ENCODE measurements at regions of chr19 and their contacts with region 1.

Region 1: DNA sequence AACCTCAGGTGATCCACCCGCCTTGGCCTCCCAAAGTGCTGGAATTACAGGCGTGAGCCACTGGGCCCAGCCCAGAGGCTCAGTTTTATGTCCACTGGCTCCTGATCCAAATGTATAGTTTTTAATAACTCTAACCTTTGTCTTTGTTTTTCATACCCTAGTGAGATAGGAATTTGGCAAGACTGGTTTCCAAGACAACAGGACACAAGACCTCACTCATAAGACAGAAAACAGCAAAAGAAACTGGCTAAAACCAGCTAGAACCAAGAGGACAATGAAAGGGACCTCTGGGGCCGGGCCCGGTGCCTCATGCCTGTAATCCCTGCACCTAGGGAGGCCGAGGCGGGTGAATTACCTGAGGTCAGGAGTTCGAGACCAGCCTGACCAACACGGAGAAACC is 27.6 kb downstream of the CPT1C start:
- DNase-seq: no peak
- ATAC-seq: no peak
- H3K4me3 ChIP-seq: no peak overlapping the region
- H3K27ac ChIP-seq: no peak overlapping the region
- H3K4me1 ChIP-seq: no peaks in the 10 kb centered on the region; the same call in 2 of the 3 replicates
- CTCF ChIP-seq: no peak
- EP300 ChIP-seq: no peak
- POLR2A ChIP-seq: no peak
- RAD21 ChIP-seq: no peak

Region 2: GRCh38 chr19:49635530-49636198 is 82.8 kb before region 1 on chr19:
- CTCF ChIA-PET with region 1: no interaction called
- POLR2A ChIA-PET with region 1: no interaction called
- DNase-seq: peak in 1 of 2 experiments; percentile 50
- ATAC-seq: no peak
- H3K4me3 ChIP-seq: no peak overlapping the region
- H3K27ac ChIP-seq: peak overlapping the region in 1 of 2 experiments; percentile 26; a peak in 2 of 6 replicates
- H3K4me1 ChIP-seq: peaks cover 20% of the 10 kb centered on the region
- CTCF ChIP-seq: no peak
- EP300 ChIP-seq: no peak
- POLR2A ChIP-seq: no peak
- RAD21 ChIP-seq: no peak

Region 3: DNA sequence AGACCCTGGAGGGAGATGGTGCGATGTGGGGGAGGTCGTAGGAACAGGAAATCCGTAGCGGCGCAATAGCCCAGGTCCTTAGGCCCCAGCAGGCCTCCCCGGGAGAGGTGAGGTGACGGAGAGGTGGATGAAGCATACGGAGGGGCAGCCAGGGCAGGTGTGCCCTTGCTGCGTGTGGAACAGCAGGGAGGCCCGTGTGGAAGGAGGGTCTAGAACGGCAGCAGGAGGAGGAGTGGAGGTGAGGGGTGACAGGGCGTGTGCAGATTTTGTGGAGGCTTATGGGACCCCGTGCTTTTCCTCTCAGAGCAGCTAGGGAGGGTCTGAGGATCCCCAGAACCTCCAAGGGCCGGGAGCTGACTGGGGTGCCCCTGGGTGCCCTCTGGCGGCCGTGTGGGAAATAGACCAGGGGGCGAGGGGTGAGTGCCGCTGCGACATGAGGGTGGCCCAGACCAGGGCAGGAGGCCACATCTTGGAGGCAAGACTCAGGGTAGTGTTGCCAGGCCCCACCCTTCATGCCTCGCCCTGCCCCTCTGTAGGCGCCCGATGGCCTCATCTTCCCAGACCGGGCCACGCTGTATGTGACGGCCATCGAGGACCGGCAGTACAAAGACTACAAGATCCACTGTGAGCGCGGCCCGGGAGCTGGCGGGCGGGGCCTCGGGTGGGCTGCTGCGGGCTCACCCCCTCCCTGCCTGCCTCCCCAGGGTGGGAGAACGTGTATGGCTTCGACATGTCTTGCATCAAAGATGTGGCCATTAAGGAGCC is 34.1 kb before region 1 on chr19:
- CTCF ChIA-PET with region 1: interaction called, 29 read pairs
- POLR2A ChIA-PET with region 1: no interaction called
- DNase-seq: peak; percentile 57 to 75
- ATAC-seq: peak; percentile 50 to 70
- H3K4me3 ChIP-seq: no peak overlapping the region
- H3K27ac ChIP-seq: 0 out of 6 replicates have a peak overlapping the region, but pooled peaks of 1 of the 2 experiments have one; percentile 2
- H3K4me1 ChIP-seq: peaks cover 27% of the 10 kb centered on the region
- CTCF ChIP-seq: peak; percentile 65
- EP300 ChIP-seq: no peak
- POLR2A ChIP-seq: no peak
- RAD21 ChIP-seq: peak in 1 of 2 experiments; percentile 17; a peak in 1 of 5 replicates

Region 4: GRCh38 chr19:49705919-49706318 is 12.6 kb before region 1 on chr19:
- CTCF ChIA-PET with region 1: interaction called, 29 read pairs
- POLR2A ChIA-PET with region 1: no interaction called
- DNase-seq: no peak
- ATAC-seq: no peak
- H3K4me3 ChIP-seq: no peak overlapping the region
- H3K27ac ChIP-seq: no peak overlapping the region
- H3K4me1 ChIP-seq: peaks cover 6% of the 10 kb centered on the region; the same call in 1 of the 3 replicates
- CTCF ChIP-seq: no peak
- EP300 ChIP-seq: no peak
- POLR2A ChIP-seq: no peak
- RAD21 ChIP-seq: no peak

Region 5: GRCh38 chr19:49749055-49749716 is 30.7 kb after region 1 on chr19:
- CTCF ChIA-PET with region 1: interaction called, 12 read pairs
- POLR2A ChIA-PET with region 1: no interaction called
- DNase-seq: peak in 1 of 2 experiments; percentile 43
- ATAC-seq: peak; percentile 43 to 61; a peak in 3 of 6 replicates
- H3K4me3 ChIP-seq: no peak overlapping the region
- H3K27ac ChIP-seq: no peak overlapping the region
- H3K4me1 ChIP-seq: no peaks in the 10 kb centered on the region
- CTCF ChIP-seq: no peak
- EP300 ChIP-seq: no peak
- POLR2A ChIP-seq: no peak
- RAD21 ChIP-seq: no peak

Region 6: GRCh38 chr19:49758292-49758691 is 39.8 kb after region 1 on chr19:
- CTCF ChIA-PET with region 1: interaction called, 15 read pairs
- POLR2A ChIA-PET with region 1: no interaction called
- DNase-seq: peak in 1 of 2 experiments; percentile 35
- ATAC-seq: peak; percentile 51 to 67; a peak in 5 of 6 replicates
- H3K4me3 ChIP-seq: no peak overlapping the region
- H3K27ac ChIP-seq: peak overlapping the region in 1 of 2 experiments; percentile 53; a peak in 3 of 6 replicates
- H3K4me1 ChIP-seq: peaks cover 8% of the 10 kb centered on the region; the same call in 1 of the 3 replicates
- CTCF ChIP-seq: no peak
- EP300 ChIP-seq: no peak
- POLR2A ChIP-seq: no peak
- RAD21 ChIP-seq: no peak

Region 7: DNA sequence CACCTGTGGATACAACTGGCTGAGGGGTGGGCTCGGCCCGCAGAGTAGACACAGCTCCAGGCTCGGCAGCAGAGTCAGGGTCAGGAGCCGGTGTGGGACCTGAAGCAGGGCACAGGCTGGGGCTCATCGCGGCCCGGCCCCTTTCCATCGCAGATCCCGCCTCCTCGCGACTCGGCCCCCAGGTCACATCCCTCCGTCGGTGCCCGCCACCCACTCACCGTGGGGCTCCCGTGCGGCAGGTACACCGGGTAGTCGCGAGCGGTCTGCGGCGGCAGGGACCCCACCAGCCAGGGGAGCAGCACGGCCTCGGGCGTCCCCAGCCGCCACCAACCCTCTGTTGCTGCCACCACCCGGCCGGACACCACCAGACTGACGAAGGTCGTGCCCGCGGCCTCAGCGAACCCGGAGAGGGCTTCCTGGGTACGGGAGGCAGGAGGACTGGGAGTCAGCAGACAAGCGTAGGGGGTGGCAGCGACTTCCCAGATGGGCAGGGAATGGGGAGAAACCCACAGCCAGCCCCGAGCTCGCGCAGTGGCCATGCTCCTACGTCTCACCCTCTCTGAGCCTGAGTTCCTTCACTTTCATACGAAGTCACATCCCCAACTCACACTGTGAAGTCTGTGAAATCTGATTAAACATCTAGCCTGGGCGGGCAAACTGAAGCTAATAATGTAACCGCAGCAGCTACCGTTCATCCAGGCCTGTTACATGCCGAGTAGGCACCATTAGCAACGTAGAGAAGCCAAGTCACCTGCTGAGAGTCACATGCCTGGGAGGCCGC is 90.8 kb after region 1 on chr19:
- CTCF ChIA-PET with region 1: interaction called, 16 read pairs
- POLR2A ChIA-PET with region 1: interaction called, 3 read pairs
- DNase-seq: peak; percentile 42 to 60
- ATAC-seq: peak; percentile 44 to 56
- H3K4me3 ChIP-seq: peak overlapping the region; percentile 62
- H3K27ac ChIP-seq: peak overlapping the region; percentile 58 to 72
- H3K4me1 ChIP-seq: peaks cover 21% of the 10 kb centered on the region
- CTCF ChIP-seq: 0 out of 3 replicates have a peak, but pooled peaks have one; percentile 15
- EP300 ChIP-seq: no peak
- POLR2A ChIP-seq: no peak
- RAD21 ChIP-seq: 0 out of 5 replicates have a peak, but pooled peaks have one; percentile 20 to 23

Measured in A549 (cell line).